ENCODE measurements at regions of chr15 and their contacts with region 1.

Region 1: GRCh38 chr15:39896846-39897245 is 23.2 kb downstream of the GPR176 start:
- DNase-seq: no peak
- H3K4me3 Mint-ChIP-seq: no peak overlapping the region
- H3K27ac Mint-ChIP-seq: no peak overlapping the region
- H3K4me1 Mint-ChIP-seq: no peaks in the 10 kb centered on the region
- H3K27me3 Mint-ChIP-seq: no peaks in the 10 kb centered on the region
- CTCF ChIP-seq: no peak

Region 2: GRCh38 chr15:39846108-39846507 is 50.7 kb before region 1 on chr15:
- CTCF ChIA-PET with region 1: no interaction called
- POLR2A ChIA-PET with region 1: no interaction called
- intact Hi-C with region 1: no loop called
- DNase-seq: no peak
- H3K4me3 Mint-ChIP-seq: no peak overlapping the region
- H3K27ac Mint-ChIP-seq: no peak overlapping the region
- H3K4me1 Mint-ChIP-seq: peaks cover 7% of the 10 kb centered on the region
- H3K27me3 Mint-ChIP-seq: no peaks in the 10 kb centered on the region
- CTCF ChIP-seq: no peak

Region 3: DNA sequence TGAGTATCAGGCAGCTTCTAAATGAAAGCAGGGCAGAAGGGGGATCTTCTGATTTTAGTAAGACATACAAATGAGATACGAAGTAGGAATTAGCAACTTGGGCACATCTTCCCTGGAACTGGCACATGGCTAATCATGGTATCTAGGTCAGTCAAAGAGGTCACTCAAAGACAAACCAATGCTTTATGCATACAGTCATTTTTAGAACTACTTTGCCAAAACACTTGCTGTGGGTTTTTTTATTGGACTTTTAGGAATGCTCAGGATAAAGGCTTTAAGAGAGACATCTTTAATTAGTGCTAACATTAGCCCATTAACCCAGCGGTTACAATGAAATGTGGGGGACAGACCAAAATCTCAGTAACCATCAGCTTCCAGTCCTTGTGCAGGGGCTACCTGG is 28.4 kb before region 1 on chr15:
- CTCF ChIA-PET with region 1: no interaction called
- POLR2A ChIA-PET with region 1: no interaction called
- intact Hi-C with region 1: no loop called
- DNase-seq: no peak
- H3K4me3 Mint-ChIP-seq: no peak overlapping the region
- H3K27ac Mint-ChIP-seq: no peak overlapping the region
- H3K4me1 Mint-ChIP-seq: no peaks in the 10 kb centered on the region
- H3K27me3 Mint-ChIP-seq: peaks cover 10% of the 10 kb centered on the region
- CTCF ChIP-seq: no peak

Region 4: GRCh38 chr15:39908186-39908585 is 11.3 kb after region 1 on chr15:
- CTCF ChIA-PET with region 1: interaction called, 10 read pairs
- POLR2A ChIA-PET with region 1: interaction called, 3 read pairs
- intact Hi-C with region 1: no loop called
- DNase-seq: peak; percentile 74
- H3K4me3 Mint-ChIP-seq: no peak overlapping the region
- H3K27ac Mint-ChIP-seq: no peak overlapping the region
- H3K4me1 Mint-ChIP-seq: peaks cover 11% of the 10 kb centered on the region
- H3K27me3 Mint-ChIP-seq: no peaks in the 10 kb centered on the region
- CTCF ChIP-seq: no peak

Measured in MCF 10A (cell line).